ENCODE measurements at regions of chr1 and their contacts with region 1.

Region 1: GRCh38 chr1:12619792-12620487 is 1.9 kb upstream of the DHRS3 start:
- DNase-seq: peak; percentile 91 to 94
- ATAC-seq: peak; percentile 83
- H3K4me3 ChIP-seq: peak overlapping the region; percentile 13 to 92
- H3K27ac ChIP-seq: peak overlapping the region in 1 of 2 donors; percentile 92
- H3K4me1 ChIP-seq: no peaks in the 10 kb centered on the region
- H3K27me3 ChIP-seq: no peaks in the 10 kb centered on the region

Region 2: DNA sequence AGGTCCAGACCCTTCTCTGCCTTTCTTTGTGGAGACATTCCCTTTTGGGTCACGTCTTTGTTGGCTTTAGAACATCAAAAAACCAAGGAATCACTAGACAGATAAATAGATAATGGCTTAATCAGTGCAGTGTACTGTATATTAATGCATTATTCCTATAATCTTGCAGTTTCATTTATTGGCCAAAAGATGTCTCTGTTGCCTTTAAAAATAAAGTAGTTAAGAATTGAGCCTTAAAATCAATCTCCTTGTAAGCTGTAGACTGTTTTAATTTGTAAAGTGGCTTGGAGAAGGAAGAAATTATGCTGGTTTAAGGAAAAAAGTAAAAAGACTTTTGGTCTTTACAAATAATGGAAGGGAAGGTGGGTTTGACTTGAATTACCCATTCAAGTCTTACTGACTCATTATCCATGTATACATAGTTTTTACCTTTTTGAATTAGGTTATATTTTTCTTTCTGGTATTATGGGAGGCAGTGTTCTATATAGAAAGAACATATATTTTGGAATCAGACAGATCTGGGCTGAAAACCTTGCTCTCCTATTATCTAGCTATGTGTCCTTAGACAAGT is 305.5 kb before region 1 on chr1:
- intact Hi-C with region 1: loop called (anchors 1 to 2 kb)
- DNase-seq: no peak
- ATAC-seq: peak; percentile 53
- H3K4me3 ChIP-seq: no peak overlapping the region
- H3K27ac ChIP-seq: no peak overlapping the region
- H3K4me1 ChIP-seq: peaks cover 0 to 3% of the 10 kb centered on the region in 2 donors
- H3K27me3 ChIP-seq: no peaks in the 10 kb centered on the region

Region 3: DNA sequence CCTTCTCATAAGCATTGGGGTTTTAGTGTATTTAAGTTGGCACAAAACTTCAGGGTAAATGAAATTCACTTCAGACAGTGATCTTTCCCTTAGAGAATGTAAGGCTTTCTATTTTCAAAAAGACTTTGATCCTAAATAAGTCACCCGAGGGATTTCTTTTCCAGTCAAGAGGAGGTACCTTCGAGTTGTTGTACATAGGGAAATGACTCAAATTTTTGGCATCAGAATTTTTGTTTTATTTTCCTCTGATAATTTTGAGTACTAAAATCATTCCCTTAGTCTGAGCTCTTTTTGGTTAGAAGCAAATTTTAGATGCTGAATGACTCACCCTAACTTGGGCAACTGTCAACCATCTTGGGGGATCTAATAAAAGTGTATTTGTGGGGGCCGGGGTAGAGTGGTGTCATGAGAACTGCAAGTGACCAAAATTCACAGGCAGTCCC is 195.8 kb before region 1 on chr1:
- intact Hi-C with region 1: loop called in 1 of 2 experiments (anchors 5 kb)
- DNase-seq: no peak
- ATAC-seq: peak; percentile 45
- H3K4me3 ChIP-seq: no peak overlapping the region
- H3K27ac ChIP-seq: peak overlapping the region; percentile 82 to 93
- H3K4me1 ChIP-seq: peaks cover 0 to 8% of the 10 kb centered on the region in 2 donors
- H3K27me3 ChIP-seq: no peaks in the 10 kb centered on the region

Region 4: DNA sequence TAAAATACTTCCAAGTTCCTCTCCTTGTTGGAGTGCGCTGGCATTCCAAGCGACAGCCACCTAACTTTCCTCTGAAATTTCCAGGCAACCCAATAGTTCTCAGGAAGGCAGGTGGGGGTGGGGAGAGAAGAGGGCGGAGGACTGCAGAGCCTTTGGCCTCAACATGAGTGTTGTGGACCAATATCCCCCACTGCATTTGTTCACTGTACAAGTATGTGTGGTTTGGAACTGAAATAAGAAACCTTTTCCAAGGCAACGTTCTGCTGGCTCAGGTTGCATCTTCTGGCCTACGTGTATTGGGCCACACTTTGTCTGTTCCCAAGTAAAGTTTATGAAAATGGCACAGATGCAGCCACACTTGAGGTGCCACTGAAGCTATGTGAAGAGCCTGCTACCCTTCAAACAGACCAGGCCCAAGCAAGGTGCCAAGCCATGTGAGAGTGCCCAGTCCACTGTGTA is 155.3 kb before region 1 on chr1:
- intact Hi-C with region 1: loop called in 1 of 2 experiments (anchors 10 kb)
- DNase-seq: peak; percentile 79 to 83
- ATAC-seq: peak; percentile 87
- H3K4me3 ChIP-seq: no peak overlapping the region
- H3K27ac ChIP-seq: peak overlapping the region; percentile 69 to 88
- H3K4me1 ChIP-seq: peaks cover 6 to 39% of the 10 kb centered on the region in 2 donors
- H3K27me3 ChIP-seq: no peaks in the 10 kb centered on the region

Region 5: DNA sequence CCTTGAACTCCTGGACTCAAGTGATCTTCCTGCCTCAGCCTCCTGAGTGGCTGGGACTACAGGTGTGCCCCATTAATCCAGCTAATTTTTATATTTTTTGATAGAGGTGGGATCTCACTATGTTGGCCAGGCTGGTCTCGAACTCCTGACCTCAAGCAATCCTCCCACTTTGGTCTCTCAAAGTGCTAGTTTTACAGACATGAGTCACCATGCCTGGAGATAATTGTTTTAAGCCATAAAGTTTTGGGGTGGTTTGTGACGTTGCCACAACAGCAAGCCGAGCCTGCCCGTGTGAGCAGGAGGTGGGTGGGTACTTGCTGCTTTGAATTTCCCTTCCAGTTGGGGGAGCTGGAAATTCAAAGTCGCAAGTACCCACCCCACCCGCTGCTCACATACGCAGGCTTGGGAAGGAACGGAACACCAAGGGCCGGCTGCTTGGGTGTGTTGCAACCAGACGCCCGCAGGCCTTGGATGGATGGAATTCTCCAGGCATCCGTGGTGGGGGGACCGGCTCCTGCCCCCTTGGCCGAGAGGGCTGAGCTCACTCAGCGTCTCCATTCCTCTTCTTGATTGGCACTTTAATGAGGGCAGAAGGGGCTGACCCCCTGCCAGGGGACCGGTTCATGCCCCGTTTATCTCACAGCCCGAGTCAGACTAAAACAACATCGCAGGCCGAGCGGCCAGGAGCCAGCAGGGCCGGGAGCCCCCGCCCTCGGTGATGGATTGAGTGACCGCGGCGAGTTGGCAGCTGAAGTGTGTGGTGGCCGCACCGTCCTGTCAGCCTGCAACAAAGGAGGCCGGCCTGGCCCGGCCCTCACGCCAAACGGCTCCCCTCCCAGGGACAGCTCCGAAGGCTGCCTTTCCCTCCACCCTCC is 80.0 kb before region 1 on chr1:
- intact Hi-C with region 1: loop called (anchors 5 kb)
- DNase-seq: peak; percentile 94
- ATAC-seq: peak; percentile 92
- H3K4me3 ChIP-seq: no peak overlapping the region
- H3K27ac ChIP-seq: peak overlapping the region in 1 of 2 donors; percentile 60
- H3K4me1 ChIP-seq: no peaks in the 10 kb centered on the region
- H3K27me3 ChIP-seq: no peaks in the 10 kb centered on the region

Region 6: DNA sequence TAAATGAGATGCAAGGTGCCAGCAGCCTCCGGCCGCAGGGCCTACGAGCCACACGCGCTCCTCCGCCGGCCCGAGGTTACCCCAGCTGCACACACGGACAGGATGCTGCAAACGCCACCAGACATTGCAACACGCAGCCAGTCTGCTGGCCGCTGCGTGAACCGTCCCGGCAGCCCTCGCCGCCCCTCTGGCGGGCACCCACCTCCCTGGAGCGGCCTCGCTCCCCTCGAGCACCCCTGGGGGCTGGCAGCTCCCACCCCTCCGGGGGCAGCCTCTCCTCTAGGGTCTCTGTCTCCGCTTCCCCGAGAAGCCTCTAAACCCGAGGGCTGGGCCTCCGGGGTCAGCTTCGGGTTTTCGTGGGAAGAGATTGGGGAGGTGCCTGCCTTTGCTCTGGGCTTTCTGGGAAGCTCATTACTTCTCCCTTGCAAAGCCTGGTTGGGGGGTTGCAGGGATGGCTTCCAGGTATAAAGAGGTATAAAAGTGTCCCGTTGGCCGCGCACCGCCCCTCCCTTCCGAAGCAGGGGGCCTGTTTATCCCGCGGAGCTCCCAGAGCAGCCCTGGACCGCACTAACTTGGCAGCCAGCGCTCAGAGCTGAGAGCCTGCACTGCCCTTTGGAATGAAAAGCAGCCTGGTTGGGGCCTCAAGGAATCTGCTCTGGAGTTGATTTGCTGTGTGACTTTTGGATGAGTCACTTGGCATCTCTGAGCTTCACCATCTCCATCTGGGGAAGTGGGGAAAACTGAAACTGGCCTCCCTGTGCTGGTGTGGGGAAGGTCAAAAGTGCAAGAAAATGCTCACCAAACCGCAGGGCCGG is 23.7 kb before region 1 on chr1:
- intact Hi-C with region 1: loop called (anchors 2 kb)
- DNase-seq: peak; percentile 96 to 98
- ATAC-seq: peak; percentile 90
- H3K4me3 ChIP-seq: no peak overlapping the region
- H3K27ac ChIP-seq: peak overlapping the region; percentile 90 to 97
- H3K4me1 ChIP-seq: no peaks in the 10 kb centered on the region
- H3K27me3 ChIP-seq: no peaks in the 10 kb centered on the region

Region 7: GRCh38 chr1:12669529-12670068 is 49.7 kb after region 1 on chr1:
- intact Hi-C with region 1: no loop called
- DNase-seq: no peak
- ATAC-seq: no peak
- H3K4me3 ChIP-seq: no peak overlapping the region
- H3K27ac ChIP-seq: no peak overlapping the region
- H3K4me1 ChIP-seq: no peaks in the 10 kb centered on the region
- H3K27me3 ChIP-seq: no peaks in the 10 kb centered on the region

Measured in aorta (tissue), 5 donors.